MCF 10A (cell line): ENCODE measurements at regions of chr5 and their contacts with region 1.

Region 1: GRCh38 chr5:137498736-137499505 is at the start of gene SPOCK1:
- DNase-seq: peak; percentile 80
- H3K4me3 Mint-ChIP-seq: peak within 1 kb of the TSS; percentile 19
- H3K27ac Mint-ChIP-seq: no peak within 1 kb of the TSS
- H3K4me1 Mint-ChIP-seq: peaks cover 5% of the 10 kb centered on the region
- H3K27me3 Mint-ChIP-seq: no peaks in the 10 kb centered on the region
- CTCF ChIP-seq: peak; percentile 95
- total RNA-seq, gene SPOCK1: 34.3 and 61.6 TPM in 2 replicates

Region 2: DNA sequence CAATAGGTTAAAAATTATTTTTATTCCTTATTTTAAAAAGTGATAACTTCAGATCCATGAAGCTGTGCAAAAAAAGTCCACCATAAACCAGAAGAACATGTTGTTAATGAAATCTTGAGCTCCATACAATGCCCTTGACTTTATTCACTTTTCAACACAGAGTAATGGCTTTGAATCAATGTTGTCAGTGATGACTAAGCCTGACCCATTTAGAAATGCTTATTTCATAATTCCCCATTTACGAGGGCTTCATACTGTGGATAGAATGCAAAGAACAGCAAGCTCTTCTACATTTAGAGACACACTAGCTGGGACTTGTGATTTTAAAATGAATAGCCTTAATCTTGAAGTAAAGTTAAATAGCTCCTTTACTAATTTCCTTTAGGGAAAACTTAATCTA is 1577.5 kb before region 1 on chr5:
- CTCF ChIA-PET with region 1: no interaction called
- POLR2A ChIA-PET with region 1: no interaction called
- intact Hi-C with region 1: no loop called
- DNase-seq: peak; percentile 72
- H3K4me3 Mint-ChIP-seq: no peak overlapping the region
- H3K27ac Mint-ChIP-seq: no peak overlapping the region
- H3K4me1 Mint-ChIP-seq: no peaks in the 10 kb centered on the region
- H3K27me3 Mint-ChIP-seq: peaks cover 84% of the 10 kb centered on the region
- CTCF ChIP-seq: no peak

Region 3: GRCh38 chr5:136802383-136802782 is 696.5 kb before region 1 on chr5:
- CTCF ChIA-PET with region 1: interaction called, 17 read pairs
- POLR2A ChIA-PET with region 1: no interaction called
- intact Hi-C with region 1: loop called (anchors 1 kb)
- DNase-seq: peak; percentile 34
- H3K4me3 Mint-ChIP-seq: no peak overlapping the region
- H3K27ac Mint-ChIP-seq: no peak overlapping the region
- H3K4me1 Mint-ChIP-seq: no peaks in the 10 kb centered on the region
- H3K27me3 Mint-ChIP-seq: peaks cover 43% of the 10 kb centered on the region
- CTCF ChIP-seq: peak; percentile 49

Region 4: GRCh38 chr5:137220523-137220927 is 278.4 kb before region 1 on chr5:
- CTCF ChIA-PET with region 1: interaction called, 5 read pairs
- POLR2A ChIA-PET with region 1: no interaction called
- intact Hi-C with region 1: loop called (anchors 1 kb)
- DNase-seq: peak; percentile 96
- H3K4me3 Mint-ChIP-seq: no peak overlapping the region
- H3K27ac Mint-ChIP-seq: no peak overlapping the region
- H3K4me1 Mint-ChIP-seq: peaks cover 30% of the 10 kb centered on the region
- H3K27me3 Mint-ChIP-seq: no peaks in the 10 kb centered on the region
- CTCF ChIP-seq: peak; percentile 76

Region 5: DNA sequence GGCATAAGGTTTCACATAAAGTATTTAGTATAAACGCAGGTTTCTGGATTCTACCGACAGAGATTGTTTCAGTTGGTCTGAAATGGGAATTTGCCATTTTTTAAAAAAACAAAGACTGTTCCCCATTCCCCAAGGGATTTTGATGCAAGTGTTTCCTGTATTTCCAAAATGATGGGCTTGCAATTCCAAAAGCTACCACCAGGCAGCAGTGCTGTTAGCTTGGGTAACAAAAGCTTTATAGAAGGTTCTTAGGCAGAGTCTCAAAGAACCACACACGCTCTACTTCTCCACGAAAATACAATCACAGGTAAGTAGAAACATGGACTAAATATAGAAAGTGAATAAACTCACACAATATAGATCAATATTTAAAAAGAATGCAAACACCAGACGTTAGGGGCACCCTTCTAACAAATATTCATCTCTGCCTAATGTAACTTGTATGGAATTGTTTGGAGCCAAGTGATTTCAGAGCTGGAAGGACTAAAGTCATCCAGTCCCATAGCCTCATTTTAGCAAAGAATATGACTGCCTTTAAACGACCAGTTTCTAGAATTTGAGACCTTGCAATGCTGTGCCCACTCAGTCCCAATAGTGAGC is 154.1 kb before region 1 on chr5:
- CTCF ChIA-PET with region 1: interaction called, 46 read pairs
- POLR2A ChIA-PET with region 1: interaction called, 5 read pairs
- intact Hi-C with region 1: loop called (anchors 1 kb)
- DNase-seq: peak; percentile 78
- H3K4me3 Mint-ChIP-seq: no peak overlapping the region
- H3K27ac Mint-ChIP-seq: no peak overlapping the region
- H3K4me1 Mint-ChIP-seq: peaks cover 8% of the 10 kb centered on the region
- H3K27me3 Mint-ChIP-seq: no peaks in the 10 kb centered on the region
- CTCF ChIP-seq: peak; percentile 94

Region 6: GRCh38 chr5:137453485-137454080 is 45.3 kb before region 1 on chr5:
- CTCF ChIA-PET with region 1: interaction called, 10 read pairs
- POLR2A ChIA-PET with region 1: no interaction called
- intact Hi-C with region 1: no loop called
- DNase-seq: peak; percentile 86
- H3K4me3 Mint-ChIP-seq: no peak overlapping the region
- H3K27ac Mint-ChIP-seq: no peak overlapping the region
- H3K4me1 Mint-ChIP-seq: no peaks in the 10 kb centered on the region
- H3K27me3 Mint-ChIP-seq: no peaks in the 10 kb centered on the region
- CTCF ChIP-seq: no peak

Region 7: GRCh38 chr5:137487600-137487999 is 11.3 kb before region 1 on chr5:
- CTCF ChIA-PET with region 1: interaction called, 16 read pairs
- POLR2A ChIA-PET with region 1: no interaction called
- intact Hi-C with region 1: no loop called
- DNase-seq: peak; percentile 40
- H3K4me3 Mint-ChIP-seq: no peak overlapping the region
- H3K27ac Mint-ChIP-seq: no peak overlapping the region
- H3K4me1 Mint-ChIP-seq: peaks cover 14% of the 10 kb centered on the region
- H3K27me3 Mint-ChIP-seq: no peaks in the 10 kb centered on the region
- CTCF ChIP-seq: no peak

Region 8: GRCh38 chr5:137605411-137605810 is 106.5 kb after region 1 on chr5:
- CTCF ChIA-PET with region 1: interaction called, 5 read pairs
- POLR2A ChIA-PET with region 1: no interaction called
- intact Hi-C with region 1: loop called (anchors 2 kb)
- DNase-seq: peak; percentile 26
- H3K4me3 Mint-ChIP-seq: no peak overlapping the region
- H3K27ac Mint-ChIP-seq: no peak overlapping the region
- H3K4me1 Mint-ChIP-seq: peaks cover 6% of the 10 kb centered on the region
- H3K27me3 Mint-ChIP-seq: peaks cover 17% of the 10 kb centered on the region
- CTCF ChIP-seq: peak; percentile 28